CD4-positive, alpha-beta T cell (primary cell): ENCODE measurements at regions of chr2 and their contacts with region 1.

Region 1: GRCh38 chr2:200584639-200585038 is 1.2 kb upstream of the AOX1 start:
- DNase-seq: no peak
- ATAC-seq: no peak
- H3K4me3 ChIP-seq: no peak overlapping the region
- H3K4me3 Mint-ChIP-seq: no peak overlapping the region
- H3K27ac ChIP-seq: no peak overlapping the region
- H3K27ac Mint-ChIP-seq: no peak overlapping the region
- H3K4me1 ChIP-seq: peaks cover 11% of the 10 kb centered on the region
- H3K4me1 Mint-ChIP-seq: peaks cover 9% of the 10 kb centered on the region
- H3K27me3 ChIP-seq: no peaks in the 10 kb centered on the region
- H3K27me3 Mint-ChIP-seq: no peaks in the 10 kb centered on the region
- CTCF ChIP-seq: no peak

Region 2: DNA sequence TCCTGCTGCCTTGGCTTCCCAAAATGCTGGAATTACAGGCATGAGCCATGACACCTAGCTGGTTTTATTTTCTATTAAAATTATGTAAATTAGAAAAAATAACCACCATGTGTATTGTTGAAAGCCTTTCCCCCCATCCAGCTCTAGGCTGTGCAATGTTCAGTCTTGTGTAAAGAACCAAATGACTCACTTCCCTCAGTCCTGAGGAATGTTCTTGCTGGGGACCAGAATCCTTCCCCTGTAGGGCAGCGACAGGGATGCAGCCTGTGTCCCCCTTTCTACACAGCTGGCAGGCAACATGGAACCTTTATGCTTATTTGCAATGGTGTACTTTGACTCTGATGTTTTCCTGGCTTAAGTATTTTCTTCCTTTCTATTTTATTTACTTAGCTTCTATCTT is 30.6 kb after region 1 on chr2:
- CTCF ChIA-PET with region 1: no interaction called
- POLR2A ChIA-PET with region 1: no interaction called
- intact Hi-C with region 1: no loop called
- DNase-seq: no peak
- ATAC-seq: no peak
- H3K4me3 ChIP-seq: no peak overlapping the region
- H3K4me3 Mint-ChIP-seq: no peak overlapping the region
- H3K27ac ChIP-seq: no peak overlapping the region
- H3K27ac Mint-ChIP-seq: no peak overlapping the region
- H3K4me1 ChIP-seq: no peaks in the 10 kb centered on the region
- H3K4me1 Mint-ChIP-seq: no peaks in the 10 kb centered on the region
- H3K27me3 ChIP-seq: no peaks in the 10 kb centered on the region
- H3K27me3 Mint-ChIP-seq: no peaks in the 10 kb centered on the region
- CTCF ChIP-seq: no peak

Region 3: DNA sequence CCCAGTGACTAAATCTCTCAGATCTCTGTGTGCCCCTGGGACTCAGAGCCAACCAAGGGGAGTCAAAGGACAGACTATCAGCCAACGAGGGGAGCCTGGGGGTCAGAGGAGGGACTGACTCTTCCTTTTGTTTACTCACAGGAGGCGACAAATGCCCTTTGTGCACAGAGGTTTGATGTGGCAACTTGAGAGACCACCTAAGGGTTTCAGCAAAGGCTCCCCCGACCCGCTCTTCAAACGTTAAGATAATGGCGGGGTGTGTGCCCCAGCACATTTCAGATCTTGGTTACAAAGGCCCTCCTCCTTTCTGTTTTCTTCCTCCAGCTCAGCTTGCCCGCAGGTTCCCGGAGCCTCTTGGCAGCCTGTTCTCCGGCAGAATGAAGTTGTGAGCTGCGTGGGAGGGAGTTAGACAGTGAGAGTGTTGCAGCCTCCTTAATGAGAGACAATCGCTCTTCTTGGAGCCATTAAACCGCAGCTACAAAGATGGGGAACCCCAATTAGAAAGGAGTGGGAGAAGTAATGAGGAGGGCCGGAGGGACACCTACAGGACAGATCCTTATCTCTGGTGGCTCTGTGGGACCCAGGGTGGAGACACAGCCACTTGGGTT is 1564.6 kb after region 1 on chr2:
- CTCF ChIA-PET with region 1: no interaction called
- POLR2A ChIA-PET with region 1: no interaction called
- intact Hi-C with region 1: loop called in 1 of 2 experiments (anchors 5 kb)
- DNase-seq: no peak
- ATAC-seq: no peak
- H3K4me3 ChIP-seq: no peak overlapping the region
- H3K4me3 Mint-ChIP-seq: no peak overlapping the region
- H3K27ac ChIP-seq: no peak overlapping the region
- H3K27ac Mint-ChIP-seq: no peak overlapping the region
- H3K4me1 ChIP-seq: no peaks in the 10 kb centered on the region
- H3K4me1 Mint-ChIP-seq: no peaks in the 10 kb centered on the region
- H3K27me3 ChIP-seq: peaks cover 0 to 6% of the 10 kb centered on the region in 2 experiments
- H3K27me3 Mint-ChIP-seq: peaks cover 8% of the 10 kb centered on the region
- CTCF ChIP-seq: no peak